HepG2 (cell line): ENCODE measurements at regions of chr10 and their contacts with region 1.

Region 1: DNA sequence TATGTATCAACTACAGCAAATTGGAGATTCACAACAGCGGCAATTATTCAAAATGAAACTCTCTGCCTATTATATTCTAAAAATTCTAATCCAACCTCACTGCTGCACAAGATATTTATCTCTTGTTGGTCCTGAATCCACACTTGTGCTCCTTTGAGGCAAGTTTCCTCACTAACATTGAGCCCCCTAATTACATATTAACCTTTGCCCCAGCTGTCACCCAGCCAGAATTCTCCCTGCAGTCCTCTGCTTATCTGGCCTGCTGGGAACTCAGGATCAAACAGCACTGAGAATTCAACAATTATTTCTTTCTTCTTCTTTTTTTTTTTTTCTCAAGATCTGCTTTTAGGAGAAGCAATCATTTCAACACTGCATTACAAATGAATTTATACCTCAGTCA is 21.5 kb upstream of the PLAC9 start:
- DNase-seq: peak; percentile 81
- ATAC-seq: peak; percentile 67
- H3K4me3 ChIP-seq: peak overlapping the region; percentile 50 to 68 (median 54)
- H3K27ac ChIP-seq: peak overlapping the region; percentile 65
- H3K4me1 ChIP-seq: peaks cover 39% of the 10 kb centered on the region
- H3K27me3 ChIP-seq: no peaks in the 10 kb centered on the region
- CTCF ChIP-seq: no peak
- EP300 ChIP-seq: peak in 1 of 2 experiments; percentile 62; a peak in 2 of 4 replicates
- POLR2A ChIP-seq: no peak
- RAD21 ChIP-seq: no peak

Region 2: DNA sequence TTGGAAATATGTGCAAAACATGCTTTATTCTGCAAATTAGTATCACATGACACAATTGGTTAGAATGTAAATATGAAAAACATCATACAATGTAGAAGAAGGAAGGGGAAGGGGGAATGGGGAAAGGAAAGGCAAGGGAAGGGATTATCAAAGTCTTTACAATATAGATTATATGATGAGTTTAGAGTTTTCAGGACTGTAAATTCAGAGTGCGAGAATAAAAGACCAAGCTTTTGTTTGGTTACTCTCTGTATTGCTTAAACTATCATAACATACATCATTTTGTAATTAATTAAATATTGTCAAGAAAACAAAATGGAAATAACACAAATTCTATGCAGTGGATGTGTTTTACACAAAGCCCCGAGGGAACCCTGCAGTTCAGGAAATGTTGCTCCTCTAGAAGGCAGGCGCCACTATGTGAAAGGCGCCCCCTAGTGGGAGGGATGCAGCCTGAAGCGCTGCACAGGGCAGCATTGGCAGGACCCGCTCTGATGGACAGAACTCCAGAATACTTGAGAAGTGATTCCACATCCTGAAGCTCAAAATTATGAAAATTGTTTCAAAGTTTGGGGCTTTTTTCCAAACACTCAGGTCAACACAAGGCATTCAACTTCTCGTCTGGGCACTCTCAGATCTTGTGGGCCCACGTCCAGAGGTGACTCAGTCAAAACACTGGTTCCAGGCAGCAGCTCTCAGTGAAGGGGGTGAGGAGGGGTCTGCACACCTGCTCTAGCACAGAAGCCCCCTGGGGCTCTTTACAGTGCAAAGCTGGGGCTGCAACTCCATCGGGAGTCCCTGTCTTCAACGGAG is 64.2 kb before region 1 on chr10:
- CTCF ChIA-PET with region 1: no interaction called
- POLR2A ChIA-PET with region 1: no interaction called
- in situ Hi-C with region 1: no loop called
- intact Hi-C with region 1: no loop called
- DNase-seq: peak; percentile 41
- ATAC-seq: peak; percentile 97
- H3K4me3 ChIP-seq: no peak overlapping the region
- H3K27ac ChIP-seq: no peak overlapping the region
- H3K4me1 ChIP-seq: peaks cover 9% of the 10 kb centered on the region; the same call in 1 of the 2 replicates
- H3K27me3 ChIP-seq: no peaks in the 10 kb centered on the region
- CTCF ChIP-seq: peak; percentile 83
- EP300 ChIP-seq: no peak
- POLR2A ChIP-seq: no peak
- RAD21 ChIP-seq: peak; percentile 48; the same call in 1 of the 2 replicates

Region 3: DNA sequence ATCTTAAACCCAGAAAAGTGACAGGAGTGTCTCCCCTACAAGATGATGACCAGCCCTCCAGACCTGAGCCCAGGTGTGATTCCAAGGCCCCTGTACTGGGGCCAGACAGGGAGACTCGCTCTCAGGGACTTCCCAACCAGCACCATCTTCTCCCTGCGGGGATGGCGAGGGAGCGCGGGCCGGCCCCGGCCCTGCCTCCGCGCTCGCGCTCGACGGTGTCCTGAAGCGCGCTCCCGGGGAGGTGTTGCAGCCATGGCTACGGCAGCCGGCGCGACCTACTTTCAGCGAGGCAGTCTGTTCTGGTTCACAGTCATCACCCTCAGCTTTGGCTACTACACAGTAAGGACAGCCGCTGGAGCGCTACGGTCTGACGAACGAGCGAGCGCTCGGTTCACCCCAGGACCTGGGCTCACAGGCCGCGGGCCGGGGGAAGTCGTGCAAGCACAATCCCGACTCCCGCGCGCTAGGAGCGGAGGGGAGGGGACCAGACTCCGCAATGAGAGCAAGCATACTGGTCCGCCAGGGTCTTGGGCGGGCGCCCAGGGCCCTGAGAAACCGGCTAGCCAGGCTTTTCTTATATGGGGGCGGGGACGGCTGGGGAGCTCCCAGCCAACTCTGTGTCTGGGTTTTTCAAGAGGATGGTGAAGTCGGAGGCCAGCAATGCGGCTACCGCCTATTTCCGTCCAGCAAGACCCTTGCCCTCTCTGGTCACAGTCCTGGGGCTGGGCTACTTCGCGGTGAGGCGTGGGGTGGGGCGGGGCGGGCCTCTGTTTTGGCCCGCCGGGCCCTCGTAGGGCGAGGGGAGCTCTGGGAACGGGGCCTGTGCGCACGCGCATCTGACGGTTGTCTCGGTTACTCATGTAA is 32.3 kb before region 1 on chr10 and contains the start of gene TMEM254:
- CTCF ChIA-PET with region 1: no interaction called
- POLR2A ChIA-PET with region 1: interaction called, 11 read pairs
- in situ Hi-C with region 1: no loop called
- intact Hi-C with region 1: loop called (anchors 2 kb)
- DNase-seq: peak; percentile 82
- ATAC-seq: peak; percentile 91
- H3K4me3 ChIP-seq: peak within 1 kb of the TSS; percentile 80 to 100 (median 88)
- H3K27ac ChIP-seq: peak within 1 kb of the TSS; percentile 94
- H3K4me1 ChIP-seq: peaks cover 40% of the 10 kb centered on the region
- H3K27me3 ChIP-seq: no peaks in the 10 kb centered on the region; a peak in 1 of 5 replicates
- CTCF ChIP-seq: no peak; the same call in 1 of the 2 replicates
- EP300 ChIP-seq: no peak
- POLR2A ChIP-seq: peak; percentile 42 to 67; a peak in 3 of 4 replicates
- RAD21 ChIP-seq: peak; percentile 42; the same call in 1 of the 2 replicates
- total RNA-seq, gene TMEM254: 8.4 and 11.2 TPM in 2 replicates

Region 4: DNA sequence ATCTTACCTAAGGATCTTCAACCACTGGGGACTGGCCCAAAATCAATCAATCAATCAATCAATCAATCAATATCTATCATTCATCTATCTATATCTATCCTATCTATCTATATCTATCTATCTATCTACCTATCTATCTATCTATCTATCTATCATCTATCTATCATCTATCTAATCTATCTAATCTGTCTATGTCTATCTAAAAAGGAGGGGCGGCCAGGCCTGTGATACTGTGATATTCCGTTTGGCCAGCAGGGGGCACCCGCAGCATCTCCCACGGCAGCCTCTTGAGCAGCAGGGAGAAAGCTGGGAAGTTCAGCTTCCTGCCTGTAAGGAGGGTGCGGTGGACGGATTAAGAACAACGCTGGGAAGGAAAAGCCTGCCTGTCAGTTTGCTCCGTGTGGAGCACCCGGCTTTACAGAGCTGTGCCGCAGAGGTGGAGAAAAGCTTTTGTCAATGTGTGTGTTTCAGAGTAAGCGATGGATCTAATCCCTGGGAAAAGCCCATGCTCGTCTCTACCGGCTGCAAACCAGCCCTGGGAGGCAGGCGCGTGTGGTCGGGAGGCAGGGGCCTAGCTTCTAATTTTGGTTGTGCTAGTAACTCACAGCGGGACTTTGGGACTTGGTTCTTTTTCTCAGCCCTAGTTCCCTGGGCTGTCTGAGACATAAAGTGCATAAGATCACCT is 551.7 kb after region 1 on chr10:
- CTCF ChIA-PET with region 1: no interaction called
- POLR2A ChIA-PET with region 1: no interaction called
- in situ Hi-C with region 1: no loop called
- intact Hi-C with region 1: no loop called
- DNase-seq: peak; percentile 43
- ATAC-seq: peak; percentile 86
- H3K4me3 ChIP-seq: peak overlapping the region; percentile 19 to 69 (median 39); a peak in 4 of 6 replicates
- H3K27ac ChIP-seq: no peak overlapping the region
- H3K4me1 ChIP-seq: peaks cover 19% of the 10 kb centered on the region
- H3K27me3 ChIP-seq: peaks cover 0 to 2% of the 10 kb centered on the region in 2 experiments; a peak in 2 of 5 replicates
- CTCF ChIP-seq: peak; percentile 84
- EP300 ChIP-seq: no peak
- POLR2A ChIP-seq: no peak
- RAD21 ChIP-seq: 0 out of 2 replicates have a peak, but pooled peaks have one; percentile 26